Lower leg skin (tissue), 4 donors: ENCODE measurements at regions of chr10 and their contacts with region 1.

Region 1: DNA sequence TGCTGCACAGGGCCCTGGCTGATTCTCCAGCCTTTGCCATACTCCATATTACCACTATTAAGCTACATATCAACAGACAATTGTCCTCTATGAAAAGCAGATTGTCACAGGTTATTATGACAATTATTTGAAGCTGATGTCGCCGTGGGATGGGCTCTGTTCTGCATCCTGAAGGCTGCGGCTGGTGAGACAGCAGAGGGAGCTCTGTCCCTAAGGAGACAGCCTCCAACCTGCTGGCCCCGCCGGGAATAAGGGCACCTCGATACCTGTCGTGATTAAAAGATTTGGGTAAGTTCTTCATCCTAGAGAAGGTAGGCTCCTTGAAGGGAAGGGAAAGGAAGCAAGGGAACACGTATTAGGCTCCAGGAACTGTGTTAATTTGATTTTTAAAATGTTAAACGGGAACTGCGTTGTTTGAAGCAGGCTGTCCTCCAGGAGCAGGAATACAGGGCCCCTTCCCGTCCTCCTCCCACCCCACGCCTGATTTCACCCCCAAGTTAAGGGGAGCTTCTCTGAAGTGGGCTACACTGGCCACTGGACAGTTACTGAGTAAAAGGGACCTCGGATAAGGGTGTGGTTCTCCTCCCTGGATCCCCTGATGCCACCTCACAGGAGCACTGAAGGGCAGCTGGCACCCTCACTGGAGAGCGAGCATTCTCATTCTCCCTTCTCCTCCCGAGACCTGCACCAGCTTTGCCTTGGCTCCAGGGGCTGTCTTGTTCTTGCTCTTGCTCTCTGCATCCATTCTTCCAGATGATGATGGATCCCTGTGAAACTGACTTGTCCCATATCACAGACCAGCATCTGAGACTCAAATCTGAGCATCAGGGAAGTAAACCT is 11.8 kb upstream of the TIAL1 start:
- DNase-seq: peak; percentile 25 to 81
- H3K4me3 ChIP-seq: no peak overlapping the region
- CTCF ChIP-seq: no peak
- POLR2A ChIP-seq: no peak

Region 2: GRCh38 chr10:119859420-119860258 is 251.1 kb after region 1 on chr10:
- intact Hi-C with region 1: loop called (anchors 5 kb)
- DNase-seq: no peak
- H3K4me3 ChIP-seq: no peak overlapping the region
- CTCF ChIP-seq: no peak
- POLR2A ChIP-seq: no peak